Right ventricle myocardium inferior (tissue), 1 donor: ENCODE measurements at regions of chr10 and their contacts with region 1.

Region 1: DNA sequence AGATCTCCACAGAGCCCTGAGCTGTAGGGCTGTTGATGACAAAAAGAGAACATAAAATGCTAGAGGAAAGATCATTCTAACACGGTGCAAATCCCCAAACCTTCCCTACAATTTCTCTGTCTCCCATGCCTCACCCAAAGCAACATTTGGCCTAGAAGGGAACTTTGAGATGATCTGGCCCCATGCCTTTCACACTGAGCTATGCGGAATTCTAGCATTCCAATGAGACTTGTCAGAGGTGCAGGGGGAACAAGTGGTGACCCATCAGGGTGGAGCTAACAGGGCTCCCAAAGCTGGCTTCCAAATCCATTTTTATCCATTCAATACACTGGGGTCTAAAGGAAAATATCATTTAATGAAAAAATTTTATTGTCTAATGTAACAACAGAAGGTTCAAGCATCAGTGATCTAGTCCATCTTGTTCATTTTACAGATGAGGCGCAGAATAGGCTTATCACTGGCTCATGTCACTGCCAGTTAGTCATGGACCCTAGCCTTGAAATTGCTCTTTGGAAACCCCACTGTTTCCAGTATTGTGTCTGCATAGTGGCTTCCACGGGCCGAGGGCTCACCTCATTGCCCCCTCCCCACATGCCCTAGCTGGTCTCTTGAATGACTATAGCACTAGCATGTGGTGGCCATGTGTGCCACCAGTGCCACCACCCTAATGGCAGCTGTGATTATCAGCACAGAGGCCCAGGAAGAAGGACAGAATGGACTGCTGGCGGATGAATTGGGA is 1001.0 kb downstream of the LRMDA start:
- DNase-seq: no peak
- ATAC-seq: peak; percentile 42

Region 2: GRCh38 chr10:76329891-76330575 is 102.4 kb before region 1 on chr10:
- intact Hi-C with region 1: loop called (anchors 5 kb)
- DNase-seq: no peak
- ATAC-seq: no peak

Region 3: GRCh38 chr10:76547352-76547972 is 115.0 kb after region 1 on chr10:
- intact Hi-C with region 1: loop called (anchors 5 kb)
- DNase-seq: no peak
- ATAC-seq: peak; percentile 64

Region 4: DNA sequence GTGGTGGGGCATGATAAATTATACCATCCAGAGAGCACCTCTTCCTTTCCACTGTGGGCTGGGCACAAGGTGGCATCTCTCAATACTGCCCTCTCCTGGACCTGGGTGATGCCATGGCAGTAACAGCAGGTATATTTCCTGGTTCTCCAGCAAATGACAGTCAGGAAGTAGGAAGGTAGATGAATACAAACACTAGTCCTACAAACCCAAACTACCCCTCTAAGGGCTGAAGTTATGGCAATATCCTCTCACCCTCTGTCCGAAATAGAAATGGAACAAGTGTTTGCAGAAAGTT is 200.3 kb after region 1 on chr10:
- intact Hi-C with region 1: loop called (anchors 10 kb)
- DNase-seq: no peak
- ATAC-seq: peak; percentile 15

Region 5: DNA sequence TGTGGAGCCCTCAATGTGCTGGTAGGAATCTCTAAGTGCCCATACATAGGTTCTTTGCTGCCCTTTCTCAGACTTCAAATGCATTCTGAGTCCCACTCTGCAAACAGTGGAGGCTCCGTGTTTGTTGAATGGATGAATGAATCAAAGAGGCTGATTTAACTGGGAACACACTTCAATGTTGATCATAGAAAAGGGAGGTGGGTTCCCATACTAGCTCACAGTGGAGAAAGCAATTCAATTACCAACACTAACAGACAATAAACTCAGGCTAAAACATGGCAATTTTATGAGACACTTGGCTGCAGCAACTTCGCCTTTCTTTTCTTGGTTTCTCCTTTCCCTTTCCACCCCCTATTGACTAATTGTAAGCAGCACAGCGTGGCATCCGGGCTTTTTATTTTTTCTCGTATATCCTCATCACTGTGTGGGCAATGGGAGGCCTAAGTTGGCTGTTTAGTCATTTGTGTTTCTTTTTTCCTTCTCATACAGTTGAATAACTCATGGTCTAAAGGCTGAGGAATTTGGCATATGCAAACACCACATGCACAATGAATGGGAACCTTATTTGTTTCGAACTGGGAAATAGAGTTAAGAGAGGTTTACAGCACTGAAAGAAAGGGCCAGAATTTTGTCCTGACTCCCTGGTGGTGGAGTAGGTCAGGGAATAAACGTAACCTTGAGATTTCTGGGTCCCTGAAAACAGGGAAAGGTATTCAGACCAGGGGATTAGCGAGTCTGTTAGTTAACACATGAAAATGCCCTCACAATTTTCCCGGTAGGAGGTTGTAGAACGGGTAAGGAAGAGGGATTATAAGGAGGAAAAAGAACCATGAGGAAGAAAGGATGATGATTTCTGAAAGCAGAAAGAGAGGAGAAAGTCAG is 346.7 kb after region 1 on chr10:
- intact Hi-C with region 1: loop called (anchors 2 kb)
- DNase-seq: no peak
- ATAC-seq: no peak

Region 6: GRCh38 chr10:76882245-76882644 is 449.8 kb after region 1 on chr10:
- intact Hi-C with region 1: loop called (anchors 10 kb)
- DNase-seq: no peak
- ATAC-seq: peak; percentile 53

Region 7: GRCh38 chr10:77264107-77264506 is 831.7 kb after region 1 on chr10:
- intact Hi-C with region 1: no loop called
- DNase-seq: no peak
- ATAC-seq: no peak